Activated CD4-positive, alpha-beta memory T cell treated with anti-CD3 and anti-CD28 coated beads for 36 hours (primary cell): ENCODE measurements at regions of chr21 and their contacts with region 1.

Region 1: DNA sequence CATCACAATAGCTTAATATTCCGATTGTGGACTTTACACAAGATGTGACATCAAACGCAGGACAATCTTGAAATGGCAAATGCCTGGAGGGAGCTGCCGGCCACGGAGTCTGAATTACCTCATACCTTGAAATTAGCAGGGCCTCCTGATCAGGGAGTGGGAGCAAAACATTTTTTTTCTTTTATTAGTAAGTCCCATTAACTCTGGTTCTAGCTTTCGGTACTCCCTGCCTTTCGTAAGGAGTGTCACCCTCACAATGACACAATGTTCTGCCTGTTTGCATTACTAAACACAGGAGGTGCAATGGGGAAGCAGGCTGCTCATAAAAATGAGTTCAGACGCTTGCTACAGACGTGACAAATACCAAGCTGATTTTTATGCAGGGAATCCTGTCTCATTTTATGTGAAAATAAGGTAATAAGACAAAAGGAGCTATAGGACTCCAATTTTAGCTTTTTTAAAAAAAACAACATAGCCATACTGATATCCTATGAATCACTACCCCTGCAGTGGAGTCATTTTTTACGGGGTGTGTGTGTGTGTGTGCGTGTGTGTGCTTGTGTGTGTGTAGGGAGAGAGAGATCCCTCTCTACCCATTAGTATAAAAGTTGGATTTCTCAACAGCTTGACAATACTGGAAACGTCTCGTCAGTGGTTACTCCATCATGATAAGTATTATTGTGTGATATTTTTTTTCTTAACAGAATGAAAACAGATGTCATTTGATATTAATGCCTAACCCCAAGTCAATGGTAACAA is 205.1 kb upstream of the RUNX1 start:
- DNase-seq: no peak
- H3K4me3 Mint-ChIP-seq: no peak overlapping the region
- H3K27ac Mint-ChIP-seq: no peak overlapping the region
- H3K4me1 Mint-ChIP-seq: peaks cover 43% of the 10 kb centered on the region
- H3K27me3 Mint-ChIP-seq: no peaks in the 10 kb centered on the region

Region 2: GRCh38 chr21:34865928-34866284 is 388.3 kb before region 1 on chr21:
- CTCF ChIA-PET with region 1: no interaction called
- POLR2A ChIA-PET with region 1: no interaction called
- intact Hi-C with region 1: no loop called
- DNase-seq: peak; percentile 74
- H3K4me3 Mint-ChIP-seq: peak overlapping the region; percentile 27
- H3K27ac Mint-ChIP-seq: peak overlapping the region; percentile 68
- H3K4me1 Mint-ChIP-seq: peaks cover 62% of the 10 kb centered on the region
- H3K27me3 Mint-ChIP-seq: no peaks in the 10 kb centered on the region

Region 3: DNA sequence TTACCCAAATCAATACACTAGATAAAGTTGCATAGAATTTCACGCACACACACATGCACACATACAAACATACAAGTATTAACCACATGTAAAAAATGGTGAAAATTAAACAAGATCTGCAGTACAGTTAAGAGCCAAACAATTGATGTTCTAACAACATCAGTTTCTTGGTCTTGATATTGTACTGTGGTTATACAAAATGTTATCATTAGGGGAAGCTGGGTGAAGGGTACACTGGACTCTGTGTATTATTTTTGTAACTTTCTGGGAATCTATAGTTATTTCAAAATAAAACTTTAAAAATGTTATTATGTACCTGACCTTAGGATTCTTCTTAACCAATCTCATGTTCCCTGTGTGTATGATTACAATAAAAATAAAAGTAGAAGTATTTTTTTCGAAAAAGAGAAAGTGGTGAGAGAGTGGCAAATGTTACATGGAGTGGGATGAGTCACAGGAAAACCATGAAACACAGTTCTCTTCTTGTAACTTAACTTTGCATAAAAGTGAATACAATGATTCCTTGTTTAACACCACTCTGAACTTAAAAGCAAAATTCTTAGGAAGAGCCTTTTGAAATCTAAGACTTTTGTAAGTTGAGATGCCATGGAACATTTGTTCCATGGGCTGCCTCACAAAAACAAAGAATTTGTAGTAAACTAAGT is 103.5 kb before region 1 on chr21:
- CTCF ChIA-PET with region 1: no interaction called
- POLR2A ChIA-PET with region 1: no interaction called
- intact Hi-C with region 1: no loop called
- DNase-seq: no peak
- H3K4me3 Mint-ChIP-seq: peak overlapping the region; percentile 6
- H3K27ac Mint-ChIP-seq: peak overlapping the region; percentile 90
- H3K4me1 Mint-ChIP-seq: peaks cover 51% of the 10 kb centered on the region
- H3K27me3 Mint-ChIP-seq: peaks cover 1% of the 10 kb centered on the region

Region 4: GRCh38 chr21:35400233-35400957 is 146.2 kb after region 1 on chr21:
- CTCF ChIA-PET with region 1: interaction called, 8 read pairs
- POLR2A ChIA-PET with region 1: no interaction called
- intact Hi-C with region 1: loop called (anchors 5 kb)
- DNase-seq: peak; percentile 37
- H3K4me3 Mint-ChIP-seq: no peak overlapping the region
- H3K27ac Mint-ChIP-seq: no peak overlapping the region
- H3K4me1 Mint-ChIP-seq: peaks cover 24% of the 10 kb centered on the region
- H3K27me3 Mint-ChIP-seq: peaks cover 3% of the 10 kb centered on the region